Heart right ventricle (tissue), 16 donors: ENCODE measurements at regions of chr11 and their contacts with region 1.

Region 1: DNA sequence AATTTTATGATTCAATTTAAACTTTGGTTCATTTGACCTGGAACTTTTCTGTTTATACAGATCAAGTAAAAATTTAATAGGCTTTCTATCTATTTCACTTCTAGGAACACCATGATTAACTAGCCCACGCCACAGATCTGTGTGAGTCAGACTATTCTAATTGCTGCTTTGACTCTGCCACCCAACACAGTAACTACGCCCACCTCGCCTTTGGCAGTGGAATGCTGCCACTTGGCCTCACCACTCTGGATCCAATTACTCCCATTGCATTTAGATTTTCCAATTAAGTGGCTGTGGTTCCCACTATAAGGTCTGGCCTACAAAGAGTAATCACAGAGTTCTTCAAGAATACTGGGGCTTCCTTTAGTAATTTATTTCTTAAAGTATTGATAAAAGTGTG is 46.6 kb upstream of the LIN7C start:
- DNase-seq: no peak
- ATAC-seq: no peak
- H3K4me3 ChIP-seq: no peak overlapping the region
- H3K27ac ChIP-seq: no peak overlapping the region
- H3K4me1 ChIP-seq: no peaks in the 10 kb centered on the region
- H3K27me3 ChIP-seq: no peaks in the 10 kb centered on the region
- CTCF ChIP-seq: no peak

Region 2: DNA sequence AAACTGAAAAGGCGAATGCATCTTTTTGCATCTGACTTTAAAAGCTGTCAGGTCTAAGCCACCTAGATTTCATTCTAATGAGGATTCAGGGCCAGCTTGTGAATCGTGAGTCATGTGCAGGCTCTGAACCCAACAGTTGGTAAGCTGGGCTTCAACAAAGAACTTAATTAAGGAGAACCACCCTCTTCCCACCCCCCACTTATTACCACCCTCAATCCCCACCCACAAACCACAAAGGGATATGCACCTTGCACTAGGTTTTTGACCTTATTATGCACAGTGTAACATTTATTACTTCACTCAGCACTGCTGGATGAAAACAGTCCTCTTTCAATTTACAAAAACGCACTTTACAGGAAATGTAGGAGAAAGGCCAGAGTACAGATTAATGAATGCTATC is 47.5 kb after region 1 on chr11:
- intact Hi-C with region 1: loop called in 1 of 10 experiments (anchors 5 kb)
- DNase-seq: no peak
- ATAC-seq: no peak
- H3K4me3 ChIP-seq: no peak overlapping the region
- H3K27ac ChIP-seq: no peak overlapping the region
- H3K4me1 ChIP-seq: no peaks in the 10 kb centered on the region
- H3K27me3 ChIP-seq: no peaks in the 10 kb centered on the region
- CTCF ChIP-seq: no peak